GM10248 (cell line): ENCODE measurements at regions of chr11 and their contacts with region 1.

Region 1: GRCh38 chr11:14422052-14422813 is 63.2 kb upstream of the RRAS2 start:
- DNase-seq: no peak
- CTCF ChIP-seq: no peak

Region 2: GRCh38 chr11:14443638-14444037 is 21.4 kb after region 1 on chr11:
- CTCF ChIA-PET with region 1: interaction called, 10 read pairs
- POLR2A ChIA-PET with region 1: no interaction called
- DNase-seq: no peak
- CTCF ChIP-seq: no peak

Region 3: DNA sequence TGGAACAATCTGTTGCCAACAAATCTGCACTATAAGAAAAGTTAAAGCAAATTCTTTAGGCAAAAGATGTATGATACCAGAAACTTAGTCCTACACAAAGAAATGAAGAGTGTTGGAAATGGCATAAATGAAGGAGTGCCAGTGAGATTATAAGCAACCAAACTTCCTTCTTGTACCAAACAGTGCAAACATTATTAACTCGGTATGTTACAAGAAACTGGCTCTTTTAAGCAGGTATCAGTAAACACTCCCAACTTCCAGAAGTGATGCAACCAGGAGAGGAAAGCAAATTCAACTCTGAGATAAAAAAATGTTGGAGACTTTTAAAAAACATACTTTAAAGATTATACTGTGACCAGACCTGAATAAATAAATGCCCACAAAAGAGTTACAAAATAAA is 48.9 kb after region 1 on chr11:
- CTCF ChIA-PET with region 1: no interaction called
- POLR2A ChIA-PET with region 1: no interaction called
- DNase-seq: no peak
- CTCF ChIP-seq: no peak

Region 4: GRCh38 chr11:14578541-14578956 is 156.3 kb after region 1 on chr11:
- CTCF ChIA-PET with region 1: no interaction called
- POLR2A ChIA-PET with region 1: interaction called, 12 read pairs
- DNase-seq: peak; percentile 17
- CTCF ChIP-seq: no peak